ENCODE measurements at regions of chr4 and their contacts with region 1.

Region 1: DNA sequence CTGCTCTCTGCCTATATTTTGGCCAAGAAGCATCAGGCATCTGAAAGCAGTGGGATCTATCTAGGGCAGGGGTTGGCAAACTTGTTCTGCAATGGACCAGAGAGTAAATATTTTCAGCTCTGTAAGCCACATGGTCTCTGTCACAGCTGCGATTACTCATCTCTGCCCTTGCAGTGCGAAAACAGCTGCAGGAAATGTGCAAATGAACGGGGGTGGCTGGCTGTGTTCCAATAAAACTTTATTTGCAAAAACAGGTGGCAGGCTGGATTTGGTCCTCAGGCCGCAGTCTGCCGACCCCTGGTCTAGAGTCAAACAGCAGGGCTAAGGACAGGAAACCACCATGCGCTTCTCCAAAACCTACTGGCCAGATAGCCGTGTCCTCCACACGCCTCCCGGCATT is 48.6 kb downstream of the ACOX3 start:
- DNase-seq: no peak
- ATAC-seq: no peak
- H3K4me3 ChIP-seq: no peak overlapping the region
- H3K4me3 Mint-ChIP-seq: no peak overlapping the region
- H3K27ac ChIP-seq: no peak overlapping the region
- H3K27ac Mint-ChIP-seq: no peak overlapping the region
- H3K4me1 ChIP-seq: no peaks in the 10 kb centered on the region
- H3K4me1 Mint-ChIP-seq: peaks cover 4% of the 10 kb centered on the region
- H3K27me3 ChIP-seq: no peaks in the 10 kb centered on the region
- H3K27me3 Mint-ChIP-seq: no peaks in the 10 kb centered on the region
- CTCF ChIP-seq: no peak

Region 2: GRCh38 chr4:8403173-8403753 is 11.3 kb after region 1 on chr4:
- CTCF ChIA-PET with region 1: interaction called, 14 read pairs
- POLR2A ChIA-PET with region 1: no interaction called
- intact Hi-C with region 1: no loop called
- DNase-seq: peak; percentile 56
- ATAC-seq: peak; percentile 53
- H3K4me3 ChIP-seq: no peak overlapping the region
- H3K4me3 Mint-ChIP-seq: no peak overlapping the region
- H3K27ac ChIP-seq: no peak overlapping the region
- H3K27ac Mint-ChIP-seq: no peak overlapping the region
- H3K4me1 ChIP-seq: no peaks in the 10 kb centered on the region
- H3K4me1 Mint-ChIP-seq: peaks cover 2% of the 10 kb centered on the region
- H3K27me3 ChIP-seq: no peaks in the 10 kb centered on the region
- H3K27me3 Mint-ChIP-seq: no peaks in the 10 kb centered on the region
- CTCF ChIP-seq: peak; percentile 89